Prostate gland (tissue), 2 donors: ENCODE measurements at regions of chr15 and their contacts with region 1.

Region 1: GRCh38 chr15:66700802-66701421 is 1.1 kb upstream of the SMAD6 start:
- DNase-seq: peak; percentile 96
- H3K4me3 ChIP-seq: peak overlapping the region; percentile 55 to 60
- H3K27ac ChIP-seq: peak overlapping the region; percentile 79 to 82
- H3K4me1 ChIP-seq: no peaks in the 10 kb centered on the region
- H3K27me3 ChIP-seq: no peaks in the 10 kb centered on the region
- CTCF ChIP-seq: no peak
- POLR2A ChIP-seq: peak; percentile 6

Region 2: GRCh38 chr15:66404532-66404931 is 296.4 kb before region 1 on chr15:
- intact Hi-C with region 1: no loop called
- DNase-seq: no peak
- H3K4me3 ChIP-seq: no peak overlapping the region
- H3K27ac ChIP-seq: no peak overlapping the region
- H3K4me1 ChIP-seq: no peaks in the 10 kb centered on the region
- H3K27me3 ChIP-seq: no peaks in the 10 kb centered on the region
- CTCF ChIP-seq: no peak
- POLR2A ChIP-seq: no peak

Region 3: GRCh38 chr15:66504563-66505429 is 196.1 kb before region 1 on chr15 and contains the starts of genes RPL4 and ZWILCH:
- intact Hi-C with region 1: loop called (anchors 10 kb)
- DNase-seq: peak; percentile 72
- H3K4me3 ChIP-seq: peak within 1 kb of the TSS; percentile 75 to 90
- H3K27ac ChIP-seq: peak within 1 kb of the TSS; percentile 78 to 95
- H3K4me1 ChIP-seq: peaks cover 4% of the 10 kb centered on the region
- H3K27me3 ChIP-seq: no peaks in the 10 kb centered on the region
- CTCF ChIP-seq: peak in 2 of 4 experiments; percentile 31 to 32
- POLR2A ChIP-seq: peak; percentile 62
- total RNA-seq, gene RPL4: 2,395 to 5,607 TPM
- total RNA-seq, gene ZWILCH: 6.1 to 11.4 TPM

Region 4: DNA sequence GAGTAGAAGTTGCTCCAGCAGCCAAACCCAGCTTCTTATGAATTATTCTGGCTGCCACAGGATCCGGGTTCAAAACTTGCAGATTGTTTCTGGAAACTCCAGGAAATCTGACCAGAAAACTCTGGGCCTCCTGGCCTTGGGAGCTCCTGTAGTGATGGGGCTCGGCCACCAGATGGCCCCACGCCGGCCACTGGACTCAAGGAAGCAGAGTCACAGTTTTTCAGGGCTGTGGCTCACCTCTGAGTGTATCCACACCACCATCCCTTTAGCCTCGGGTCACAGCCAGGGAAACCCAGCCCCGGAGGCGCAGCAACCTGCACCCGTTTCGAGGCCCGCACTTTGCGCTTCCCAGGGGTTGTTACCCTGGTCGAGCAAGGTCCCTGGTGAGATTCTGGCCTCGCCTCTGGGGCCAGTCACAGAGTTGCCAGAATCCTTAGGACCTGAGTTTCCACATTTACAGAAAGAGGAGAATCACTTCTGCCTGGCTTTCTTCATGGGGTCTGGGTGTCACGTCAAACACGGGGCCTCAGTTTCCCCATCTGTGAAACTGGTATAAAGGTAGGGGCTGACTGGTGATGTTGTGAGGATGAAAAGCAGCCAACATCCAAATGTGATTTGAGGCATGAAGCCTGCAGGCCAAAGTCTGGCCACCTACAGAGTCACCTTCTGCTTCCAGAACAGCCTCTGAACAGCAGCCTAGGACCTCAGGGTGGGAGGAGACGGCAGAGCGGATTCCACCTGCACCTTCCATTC is 81.6 kb before region 1 on chr15:
- intact Hi-C with region 1: loop called (anchors 2 kb)
- DNase-seq: peak; percentile 68
- H3K4me3 ChIP-seq: no peak overlapping the region
- H3K27ac ChIP-seq: peak overlapping the region; percentile 24 to 39
- H3K4me1 ChIP-seq: peaks cover 13% of the 10 kb centered on the region
- H3K27me3 ChIP-seq: no peaks in the 10 kb centered on the region
- CTCF ChIP-seq: peak; percentile 64 to 90 (median 82)
- POLR2A ChIP-seq: no peak

Region 5: GRCh38 chr15:66841953-66842681 is 141.2 kb after region 1 on chr15:
- intact Hi-C with region 1: loop called (anchors 2 kb)
- DNase-seq: peak; percentile 79
- H3K4me3 ChIP-seq: peak overlapping the region; percentile 35 to 48
- H3K27ac ChIP-seq: peak overlapping the region; percentile 74 to 82
- H3K4me1 ChIP-seq: peaks cover 3% of the 10 kb centered on the region
- H3K27me3 ChIP-seq: no peaks in the 10 kb centered on the region
- CTCF ChIP-seq: peak in 1 of 4 experiments; percentile 10
- POLR2A ChIP-seq: peak; percentile 13